ENCODE measurements at regions of chr2 and their contacts with region 1.

Region 1: GRCh38 chr2:19176955-19177354 is 181.5 kb downstream of the OSR1 start:
- DNase-seq: peak; percentile 10 to 63
- H3K4me3 ChIP-seq: no peak overlapping the region
- H3K27ac ChIP-seq: no peak overlapping the region
- H3K4me1 ChIP-seq: peaks cover 10% of the 10 kb centered on the region
- H3K27me3 ChIP-seq: no peaks in the 10 kb centered on the region
- CTCF ChIP-seq: no peak

Region 2: GRCh38 chr2:19228715-19229114 is 51.8 kb after region 1 on chr2:
- CTCF ChIA-PET with region 1: no interaction called
- POLR2A ChIA-PET with region 1: no interaction called
- intact Hi-C with region 1: no loop called
- DNase-seq: no peak
- H3K4me3 ChIP-seq: no peak overlapping the region
- H3K27ac ChIP-seq: no peak overlapping the region
- H3K4me1 ChIP-seq: no peaks in the 10 kb centered on the region
- H3K27me3 ChIP-seq: no peaks in the 10 kb centered on the region
- CTCF ChIP-seq: no peak

Region 3: GRCh38 chr2:20350041-20350712 is 1173.2 kb after region 1 on chr2:
- CTCF ChIA-PET with region 1: interaction called, 17 read pairs
- POLR2A ChIA-PET with region 1: no interaction called
- intact Hi-C with region 1: no loop called
- DNase-seq: no peak
- H3K4me3 ChIP-seq: peak overlapping the region; percentile 81
- H3K27ac ChIP-seq: peak overlapping the region; percentile 88
- H3K4me1 ChIP-seq: peaks cover 47% of the 10 kb centered on the region
- H3K27me3 ChIP-seq: no peaks in the 10 kb centered on the region
- CTCF ChIP-seq: no peak